ENCODE measurements at regions of chr12 and their contacts with region 1.

Region 1: DNA sequence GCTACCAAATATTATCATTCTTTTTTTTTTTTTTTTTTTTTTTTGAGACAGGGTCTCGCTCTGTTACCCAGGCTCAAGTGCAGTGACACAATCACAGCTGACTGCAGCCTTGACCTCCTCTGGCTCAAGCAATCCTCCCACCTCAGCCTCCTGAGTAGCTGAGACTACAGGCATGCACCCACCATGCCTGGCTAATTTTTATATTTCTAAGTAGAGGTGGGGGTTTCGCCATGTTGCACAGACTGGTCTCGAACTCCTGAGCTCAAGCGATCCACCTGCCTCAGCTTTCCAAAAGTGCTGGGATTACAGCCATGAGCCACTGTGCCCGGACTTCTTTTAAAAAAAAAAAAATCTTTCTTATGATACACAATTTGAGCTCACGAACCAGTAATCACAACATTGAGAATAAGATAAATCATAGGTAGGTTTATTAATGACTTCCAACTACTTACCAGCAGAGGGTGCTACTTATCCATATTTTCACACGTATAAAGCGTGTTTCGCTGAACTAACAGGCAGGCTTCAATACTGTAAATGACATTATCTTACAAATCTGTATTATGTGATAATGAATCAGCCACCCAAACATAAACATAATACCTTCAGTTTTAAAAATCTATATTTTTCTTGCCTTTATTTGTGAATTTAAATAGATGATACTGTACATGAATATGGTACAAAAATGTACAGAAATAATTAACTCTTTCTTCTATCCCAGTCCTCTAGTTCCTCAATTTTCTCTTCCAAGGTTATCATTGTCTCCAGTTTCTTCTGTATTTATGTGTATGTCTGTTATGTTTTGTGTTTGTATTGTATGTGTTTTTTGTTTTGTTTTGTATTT is 42.5 kb upstream of the BCAT1 start:
- DNase-seq: no peak
- H3K4me3 ChIP-seq: no peak overlapping the region
- H3K27ac ChIP-seq: no peak overlapping the region
- H3K4me1 ChIP-seq: peaks cover 0 to under 1% (median 0%) of the 10 kb centered on the region in 4 donors
- H3K27me3 ChIP-seq: no peaks in the 10 kb centered on the region
- CTCF ChIP-seq: peak; percentile 53 to 82

Region 2: DNA sequence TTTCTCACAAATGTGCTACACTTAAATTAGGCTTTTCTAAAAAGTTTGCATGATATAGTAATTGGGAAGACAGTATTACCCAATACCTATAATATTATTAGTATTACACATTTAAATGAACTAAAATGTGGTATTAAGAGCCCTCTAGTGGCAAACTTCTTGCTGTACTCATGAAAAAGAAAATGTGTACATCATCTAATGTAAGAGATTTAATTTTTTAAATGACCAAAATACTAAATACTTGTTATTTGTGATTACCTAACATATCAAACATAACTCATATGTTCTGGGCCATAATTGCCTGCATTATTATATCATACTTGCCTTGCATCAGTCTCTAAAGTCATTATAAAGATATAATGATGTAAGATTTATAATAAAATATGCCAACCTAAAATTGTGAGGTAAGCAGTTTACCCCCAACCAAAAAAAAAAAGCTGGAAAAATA is 139.3 kb after region 1 on chr12:
- intact Hi-C with region 1: loop called (anchors 5 kb)
- DNase-seq: no peak
- H3K4me3 ChIP-seq: no peak overlapping the region
- H3K27ac ChIP-seq: no peak overlapping the region
- H3K4me1 ChIP-seq: no peaks in the 10 kb centered on the region
- H3K27me3 ChIP-seq: no peaks in the 10 kb centered on the region
- CTCF ChIP-seq: peak; percentile 58 to 60